ENCODE measurements at regions of chr19 and their contacts with region 1.

Region 1: GRCh38 chr19:10769533-10770491 is 51.9 kb downstream of the DNM2 start:
- DNase-seq: peak; percentile 71 to 81 (median 75)
- ATAC-seq: peak; percentile 77 to 88 (median 82)
- H3K4me3 ChIP-seq: no peak overlapping the region
- H3K27ac ChIP-seq: peak overlapping the region; percentile 39 to 81 (median 76)
- H3K4me1 ChIP-seq: peaks cover 0 to 56% (median 33%) of the 10 kb centered on the region in 4 donors
- H3K27me3 ChIP-seq: no peaks in the 10 kb centered on the region
- CTCF ChIP-seq: peak; percentile 42 to 56 (median 43)
- POLR2A ChIP-seq: peak; percentile 41

Region 2: GRCh38 chr19:10717356-10718204 is 52.2 kb before region 1 on chr19 and contains the start of gene DNM2:
- intact Hi-C with region 1: loop called (anchors 5 to 10 kb)
- DNase-seq: peak; percentile 98 to 99 (median 99)
- ATAC-seq: peak; percentile 88 to 95 (median 90)
- H3K4me3 ChIP-seq: peak within 1 kb of the TSS; percentile 90 to 100 (median 99)
- H3K27ac ChIP-seq: peak within 1 kb of the TSS; percentile 72 to 95 (median 87)
- H3K4me1 ChIP-seq: peaks cover 0 to 17% (median 4%) of the 10 kb centered on the region in 4 donors
- H3K27me3 ChIP-seq: no peaks in the 10 kb centered on the region
- CTCF ChIP-seq: peak; percentile 86 to 92 (median 90)
- POLR2A ChIP-seq: peak; percentile 82
- total RNA-seq, gene DNM2: 54.0 to 86.9 (median 68.3) TPM

Region 3: DNA sequence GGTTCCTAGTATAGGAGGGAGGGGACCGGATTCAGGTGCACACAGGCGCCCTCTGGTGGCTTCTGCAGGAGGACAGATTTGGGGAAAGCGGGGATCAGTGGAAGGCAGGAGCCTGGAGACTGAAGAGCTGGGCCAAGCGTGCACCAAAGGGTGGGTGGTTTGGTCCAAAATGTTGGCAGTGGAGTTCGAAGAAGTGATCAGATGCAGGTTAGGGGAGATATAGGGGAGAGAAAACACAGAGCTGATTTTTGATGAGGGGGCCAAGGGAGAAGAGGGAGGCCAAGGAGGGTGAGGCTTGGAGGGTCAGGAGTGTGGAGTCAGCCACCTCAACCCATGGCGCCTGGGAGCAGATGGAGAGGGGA is 94.7 kb after region 1 on chr19:
- intact Hi-C with region 1: loop called (anchors 5 to 10 kb)
- DNase-seq: peak; percentile 83 to 86 (median 84)
- ATAC-seq: peak; percentile 81 to 90 (median 87)
- H3K4me3 ChIP-seq: no peak overlapping the region
- H3K27ac ChIP-seq: no peak overlapping the region
- H3K4me1 ChIP-seq: peaks cover 0 to 5% (median 0%) of the 10 kb centered on the region in 4 donors
- H3K27me3 ChIP-seq: no peaks in the 10 kb centered on the region
- CTCF ChIP-seq: peak; percentile 76 to 89 (median 88)
- POLR2A ChIP-seq: no peak

Region 4: GRCh38 chr19:10870955-10871603 is 101.3 kb after region 1 on chr19 and contains the start of gene CARM1:
- intact Hi-C with region 1: loop called (anchors 5 to 10 kb)
- DNase-seq: peak; percentile 100
- ATAC-seq: peak; percentile 88 to 96 (median 93)
- H3K4me3 ChIP-seq: peak within 1 kb of the TSS; percentile 65 to 74 (median 67)
- H3K27ac ChIP-seq: peak within 1 kb of the TSS in 2 of 3 donors; percentile 51 to 67
- H3K4me1 ChIP-seq: peaks cover 0 to 8% (median 0%) of the 10 kb centered on the region in 4 donors
- H3K27me3 ChIP-seq: no peaks in the 10 kb centered on the region
- CTCF ChIP-seq: peak; percentile 51 to 97 (median 68)
- POLR2A ChIP-seq: no peak
- total RNA-seq, gene CARM1: 13.7 to 20.5 (median 17.5) TPM

Measured in right lobe of liver (tissue), 6 donors.